Left ventricle myocardium inferior (tissue), 1 donor: ENCODE measurements at regions of chr6 and their contacts with region 1.

Region 1: GRCh38 chr6:89242574-89243330 is 25.6 kb upstream of the GABRR1 start:
- DNase-seq: no peak
- H3K4me3 ChIP-seq: no peak overlapping the region
- H3K27ac ChIP-seq: no peak overlapping the region
- H3K4me1 ChIP-seq: no peaks in the 10 kb centered on the region
- H3K27me3 ChIP-seq: no peaks in the 10 kb centered on the region
- CTCF ChIP-seq: peak; percentile 63

Region 2: GRCh38 chr6:88965691-88966090 is 277.1 kb before region 1 on chr6:
- intact Hi-C with region 1: no loop called
- DNase-seq: no peak
- H3K4me3 ChIP-seq: no peak overlapping the region
- H3K27ac ChIP-seq: no peak overlapping the region
- H3K4me1 ChIP-seq: peaks cover 28% of the 10 kb centered on the region
- H3K27me3 ChIP-seq: no peaks in the 10 kb centered on the region
- CTCF ChIP-seq: no peak

Region 3: DNA sequence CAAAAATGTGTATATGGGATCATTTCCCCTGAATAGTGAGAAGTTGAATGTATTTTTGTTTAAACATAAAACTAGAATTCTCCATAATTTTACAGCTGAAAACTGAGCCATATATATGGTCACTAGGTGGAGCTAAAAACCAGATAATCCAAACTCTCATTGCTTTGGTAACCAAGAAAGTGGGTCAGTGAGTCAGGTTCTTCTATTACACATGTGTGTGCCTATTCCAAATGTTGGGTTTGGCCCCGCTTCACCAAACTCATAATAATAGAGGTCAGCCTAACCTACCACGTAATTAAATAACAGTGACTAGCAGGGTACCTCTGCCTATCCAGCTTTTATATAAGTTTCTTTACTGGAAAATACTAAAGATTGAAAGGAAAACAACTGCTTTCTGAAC is 260.0 kb before region 1 on chr6:
- intact Hi-C with region 1: loop called (anchors 2 kb)
- DNase-seq: no peak
- H3K4me3 ChIP-seq: no peak overlapping the region
- H3K27ac ChIP-seq: no peak overlapping the region
- H3K4me1 ChIP-seq: peaks cover 8% of the 10 kb centered on the region
- H3K27me3 ChIP-seq: no peaks in the 10 kb centered on the region
- CTCF ChIP-seq: peak; percentile 84

Region 4: GRCh38 chr6:89117211-89118108 is 125.3 kb before region 1 on chr6 and contains the start of gene SRSF12:
- intact Hi-C with region 1: no loop called
- DNase-seq: peak; percentile 30
- H3K4me3 ChIP-seq: peak within 1 kb of the TSS; percentile 78
- H3K27ac ChIP-seq: no peak within 1 kb of the TSS
- H3K4me1 ChIP-seq: peaks cover 12% of the 10 kb centered on the region
- H3K27me3 ChIP-seq: no peaks in the 10 kb centered on the region
- CTCF ChIP-seq: no peak
- total RNA-seq, gene SRSF12: not detected